PC-9 (cell line): ENCODE measurements at regions of chr7 and their contacts with region 1.

Region 1: GRCh38 chr7:138776166-138776894 is 21.5 kb upstream of the TMEM213 start:
- DNase-seq: peak in 1 of 2 experiments; percentile 28
- H3K4me3 ChIP-seq: no peak overlapping the region
- H3K27ac ChIP-seq: no peak overlapping the region
- H3K4me1 ChIP-seq: peaks cover 21% of the 10 kb centered on the region
- H3K27me3 ChIP-seq: no peaks in the 10 kb centered on the region
- CTCF ChIP-seq: no peak

Region 2: GRCh38 chr7:138316421-138317043 is 459.8 kb before region 1 on chr7:
- CTCF ChIA-PET with region 1: no interaction called
- POLR2A ChIA-PET with region 1: interaction called, 10 read pairs
- intact Hi-C with region 1: no loop called
- DNase-seq: no peak
- H3K4me3 ChIP-seq: no peak overlapping the region
- H3K27ac ChIP-seq: no peak overlapping the region
- H3K4me1 ChIP-seq: no peaks in the 10 kb centered on the region
- H3K27me3 ChIP-seq: no peaks in the 10 kb centered on the region
- CTCF ChIP-seq: no peak

Region 3: GRCh38 chr7:138645290-138645689 is 131.0 kb before region 1 on chr7:
- CTCF ChIA-PET with region 1: no interaction called
- POLR2A ChIA-PET with region 1: no interaction called
- intact Hi-C with region 1: no loop called
- DNase-seq: no peak
- H3K4me3 ChIP-seq: no peak overlapping the region
- H3K27ac ChIP-seq: no peak overlapping the region
- H3K4me1 ChIP-seq: peaks cover 9% of the 10 kb centered on the region; the same call in 1 of the 2 replicates
- H3K27me3 ChIP-seq: no peaks in the 10 kb centered on the region
- CTCF ChIP-seq: no peak; the same call in 1 of the 2 replicates